ENCODE measurements at regions of chr2 and their contacts with region 1.

Region 1: DNA sequence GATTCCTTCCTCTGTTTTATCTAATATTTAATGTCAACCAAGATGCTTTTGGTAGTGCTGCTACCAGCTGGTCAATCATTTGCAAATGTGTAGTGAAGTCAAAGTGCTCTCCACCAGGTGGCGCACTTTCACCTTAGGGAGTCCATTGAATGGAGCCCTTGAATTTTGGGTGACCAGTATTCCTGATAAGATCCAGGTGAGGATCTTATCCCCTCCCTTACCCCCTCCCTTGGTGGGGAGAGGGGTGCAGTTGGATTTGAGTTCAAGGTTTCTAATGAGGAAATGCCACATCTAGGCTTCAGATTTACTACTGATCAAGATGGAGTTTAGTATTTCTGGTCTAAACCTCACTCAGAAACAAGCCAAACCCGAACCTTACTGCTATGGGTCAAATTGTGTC is 12.0 kb upstream of the E2F6 start:
- DNase-seq: peak; percentile 81 to 97 (median 94)
- H3K4me3 ChIP-seq: no peak overlapping the region
- H3K27ac ChIP-seq: no peak overlapping the region
- H3K4me1 ChIP-seq: peaks cover 0 to 5% of the 10 kb centered on the region in 2 donors
- H3K27me3 ChIP-seq: peaks cover 7% of the 10 kb centered on the region
- CTCF ChIP-seq: peak; percentile 85 to 96 (median 92)
- POLR2A ChIP-seq: no peak

Region 2: GRCh38 chr2:9832586-9832985 is 1645.4 kb before region 1 on chr2:
- intact Hi-C with region 1: no loop called
- DNase-seq: no peak
- H3K4me3 ChIP-seq: no peak overlapping the region
- H3K27ac ChIP-seq: no peak overlapping the region
- H3K4me1 ChIP-seq: no peaks in the 10 kb centered on the region
- H3K27me3 ChIP-seq: no peaks in the 10 kb centered on the region
- CTCF ChIP-seq: no peak
- POLR2A ChIP-seq: no peak

Region 3: GRCh38 chr2:11145350-11145749 is 332.6 kb before region 1 on chr2:
- intact Hi-C with region 1: no loop called
- DNase-seq: no peak
- H3K4me3 ChIP-seq: no peak overlapping the region
- H3K27ac ChIP-seq: no peak overlapping the region
- H3K4me1 ChIP-seq: peaks cover 0 to 5% of the 10 kb centered on the region in 2 donors
- H3K27me3 ChIP-seq: no peaks in the 10 kb centered on the region
- CTCF ChIP-seq: no peak
- POLR2A ChIP-seq: no peak

Region 4: DNA sequence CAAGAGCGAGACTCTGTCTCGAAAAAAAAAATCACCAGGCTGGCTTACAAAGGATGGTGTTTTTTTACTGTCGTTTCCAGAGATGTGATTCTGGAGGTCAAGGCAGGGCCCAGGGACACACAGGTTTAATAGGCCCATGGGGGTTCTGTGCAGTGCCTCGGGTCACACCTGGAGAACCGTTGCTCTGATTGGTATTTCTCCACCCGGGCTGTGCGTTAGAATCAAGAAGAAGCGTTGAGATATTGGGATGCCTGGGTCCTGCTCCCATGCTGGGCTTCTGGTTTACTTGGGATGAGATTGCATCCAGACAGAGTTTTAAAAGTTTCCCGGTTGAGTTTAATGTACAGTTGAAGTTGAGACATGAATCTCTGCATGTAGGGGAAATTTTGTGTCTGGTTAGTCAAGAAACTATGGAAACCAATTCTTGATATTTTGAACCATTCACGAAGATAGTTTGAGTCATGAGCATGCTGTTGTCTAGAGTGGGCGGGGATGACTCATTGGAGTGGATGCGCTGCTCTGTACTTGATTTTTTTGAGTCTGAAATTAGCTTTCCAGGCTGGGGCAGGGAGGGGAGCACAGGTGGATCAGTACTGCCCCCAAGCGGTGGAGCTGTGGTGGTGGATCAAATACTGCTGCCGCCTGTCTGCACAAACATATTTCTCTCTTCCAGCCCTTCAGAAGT is 106.0 kb after region 1 on chr2:
- intact Hi-C with region 1: loop called (anchors 2 to 5 kb)
- DNase-seq: peak; percentile 77 to 91 (median 86)
- H3K4me3 ChIP-seq: no peak overlapping the region
- H3K27ac ChIP-seq: no peak overlapping the region
- H3K4me1 ChIP-seq: no peaks in the 10 kb centered on the region
- H3K27me3 ChIP-seq: no peaks in the 10 kb centered on the region
- CTCF ChIP-seq: peak; percentile 77 to 96 (median 92)
- POLR2A ChIP-seq: no peak

Region 5: DNA sequence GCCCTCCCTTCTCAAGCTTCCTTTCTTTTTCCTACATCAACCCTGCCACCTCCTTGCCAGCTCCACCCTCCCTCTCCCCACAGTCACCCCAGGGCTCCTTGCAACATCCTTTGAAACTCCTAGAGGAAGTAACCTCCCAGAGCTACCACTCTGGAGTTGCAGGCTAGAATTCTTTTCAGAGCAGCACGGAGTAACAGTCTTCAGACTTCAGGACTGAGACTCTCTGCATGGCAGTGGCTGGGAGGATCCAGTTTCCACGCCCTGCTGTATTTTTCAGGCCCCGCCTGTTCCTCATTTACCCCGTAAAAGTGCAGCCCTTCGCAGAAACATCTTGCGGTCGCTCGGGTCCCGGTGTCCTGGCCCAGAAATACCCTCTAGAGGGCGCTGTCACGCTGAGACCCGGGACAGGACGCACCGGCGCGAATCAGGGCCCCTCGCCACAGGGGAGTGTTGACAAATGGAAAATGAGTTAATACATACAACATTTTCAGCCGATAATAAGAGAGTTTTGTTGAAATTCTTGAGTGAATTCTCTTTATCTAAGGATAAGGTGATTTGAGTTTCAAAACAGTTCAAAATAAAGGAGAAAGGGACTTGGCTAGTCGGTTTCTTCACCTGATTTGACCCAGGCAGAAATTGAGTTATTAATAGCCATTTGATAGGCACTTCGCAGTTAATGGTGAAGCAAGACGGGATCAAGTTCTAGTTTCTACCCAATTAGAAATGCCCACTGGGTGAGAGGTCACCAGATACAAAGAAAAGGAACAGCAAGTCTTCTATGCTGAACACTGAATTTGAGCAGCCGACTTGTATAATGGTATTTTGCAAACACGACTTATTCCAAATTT is 210.5 kb after region 1 on chr2:
- intact Hi-C with region 1: loop called (anchors 10 kb)
- DNase-seq: peak; percentile 81 to 94 (median 87)
- H3K4me3 ChIP-seq: peak overlapping the region in 1 of 4 donors; percentile 31
- H3K27ac ChIP-seq: peak overlapping the region in 2 of 5 donors; percentile 65 to 67
- H3K4me1 ChIP-seq: peaks cover 6 to 15% of the 10 kb centered on the region in 2 donors
- H3K27me3 ChIP-seq: no peaks in the 10 kb centered on the region
- CTCF ChIP-seq: peak; percentile 79 to 95 (median 88)
- POLR2A ChIP-seq: no peak

Measured in adrenal gland (tissue), 19 donors.